Ovary (tissue), 10 donors: ENCODE measurements at regions of chr17 and their contacts with region 1.

Region 1: GRCh38 chr17:50904521-50905459 is 38.6 kb upstream of the TOB1 start:
- DNase-seq: peak; percentile 50 to 83 (median 70)
- H3K4me3 ChIP-seq: no peak overlapping the region
- H3K27ac ChIP-seq: peak overlapping the region; percentile 64 to 66
- H3K4me1 ChIP-seq: peaks cover 6% of the 10 kb centered on the region
- H3K27me3 ChIP-seq: no peaks in the 10 kb centered on the region
- CTCF ChIP-seq: no peak
- EP300 ChIP-seq: no peak
- POLR2A ChIP-seq: no peak

Region 2: DNA sequence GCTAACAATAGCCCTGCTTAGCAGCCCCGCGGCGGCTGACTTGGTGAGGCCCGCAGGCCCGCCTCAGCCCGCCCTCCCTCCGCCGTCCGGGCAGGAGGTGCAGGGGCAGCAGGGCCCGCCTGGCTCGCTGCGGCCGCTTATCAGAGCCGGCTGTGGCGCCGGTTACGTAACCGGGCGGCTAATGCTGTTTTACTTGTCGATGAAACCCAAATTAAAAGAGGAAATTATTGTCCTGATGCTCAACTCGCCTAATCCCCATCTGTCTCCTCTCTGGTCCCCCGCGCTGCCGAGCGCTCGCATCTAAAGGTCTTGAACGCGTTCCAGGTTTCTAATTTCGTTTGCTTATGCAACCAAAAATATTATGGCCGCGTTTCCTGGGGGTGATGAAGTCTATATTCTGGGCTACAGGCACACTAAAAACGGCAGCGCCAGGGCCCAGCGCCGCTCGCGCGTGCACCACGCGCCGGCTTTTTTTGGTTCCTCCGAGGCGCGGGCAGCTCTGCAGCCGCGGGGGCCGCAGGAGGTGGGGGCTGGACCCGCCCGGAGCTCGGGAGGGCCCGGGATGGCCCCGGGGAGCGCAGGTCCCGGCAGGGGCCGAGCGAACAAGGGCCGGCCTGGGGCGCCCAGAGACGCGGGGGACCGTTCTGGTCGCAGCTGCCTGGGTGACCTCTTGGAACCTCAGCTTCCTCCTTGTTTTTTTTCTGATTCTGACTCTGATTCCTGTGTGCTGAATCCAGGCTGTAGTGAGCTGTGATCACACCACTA is 26.5 kb after region 1 on chr17:
- intact Hi-C with region 1: loop called in 1 of 4 experiments (anchors 2 kb)
- DNase-seq: peak; percentile 82 to 89 (median 84)
- H3K4me3 ChIP-seq: peak overlapping the region; percentile 42
- H3K27ac ChIP-seq: peak overlapping the region; percentile 85 to 96
- H3K4me1 ChIP-seq: peaks cover 2% of the 10 kb centered on the region
- H3K27me3 ChIP-seq: no peaks in the 10 kb centered on the region
- CTCF ChIP-seq: no peak
- EP300 ChIP-seq: no peak
- POLR2A ChIP-seq: peak; percentile 33

Region 3: GRCh38 chr17:51046514-51047384 is 142.0 kb after region 1 on chr17:
- intact Hi-C with region 1: no loop called
- DNase-seq: peak; percentile 68 to 76 (median 72)
- H3K4me3 ChIP-seq: peak overlapping the region; percentile 35
- H3K27ac ChIP-seq: peak overlapping the region in 1 of 2 donors; percentile 60
- H3K4me1 ChIP-seq: peaks cover 3% of the 10 kb centered on the region
- H3K27me3 ChIP-seq: no peaks in the 10 kb centered on the region
- CTCF ChIP-seq: no peak
- EP300 ChIP-seq: no peak
- POLR2A ChIP-seq: no peak